PC-9 (cell line): ENCODE measurements at regions of chr3 and their contacts with region 1.

Region 1: DNA sequence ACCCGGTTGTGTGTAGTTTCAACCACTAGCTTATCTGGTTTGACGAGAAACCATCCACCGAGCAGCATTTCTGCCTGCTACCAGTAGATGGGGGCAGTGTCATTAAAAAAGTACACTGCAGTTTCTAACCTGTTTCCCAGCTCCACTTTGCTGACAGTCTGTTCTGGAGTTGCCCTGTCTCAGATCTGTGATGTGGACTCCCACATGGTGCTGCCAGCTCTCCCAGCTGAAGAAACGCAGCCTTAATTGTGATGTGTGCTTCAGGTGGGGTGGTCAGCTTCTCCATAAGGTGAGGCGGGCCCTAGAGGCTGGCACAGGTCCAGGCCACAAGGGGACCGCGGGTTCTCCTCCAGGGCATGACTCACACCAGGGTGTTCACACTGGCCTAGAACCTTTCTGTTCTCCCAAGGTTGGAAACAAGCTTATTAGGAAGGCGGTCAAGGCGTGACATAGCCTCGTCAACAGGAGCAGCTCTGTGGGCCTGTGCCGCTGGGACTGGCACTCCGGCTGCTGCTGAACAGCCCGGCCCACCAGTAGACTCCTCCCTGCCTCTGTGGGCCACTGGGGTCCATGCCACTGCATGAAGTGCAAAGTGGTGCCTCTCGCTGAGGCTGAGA is 2.9 kb upstream of the FAM43A start:
- DNase-seq: peak; percentile 82 to 94
- H3K4me3 ChIP-seq: no peak overlapping the region
- H3K27ac ChIP-seq: 0 out of 2 replicates have a peak overlapping the region, but pooled peaks have one; percentile 13
- H3K4me1 ChIP-seq: peaks cover 19% of the 10 kb centered on the region
- H3K27me3 ChIP-seq: no peaks in the 10 kb centered on the region
- CTCF ChIP-seq: peak; percentile 81

Region 2: DNA sequence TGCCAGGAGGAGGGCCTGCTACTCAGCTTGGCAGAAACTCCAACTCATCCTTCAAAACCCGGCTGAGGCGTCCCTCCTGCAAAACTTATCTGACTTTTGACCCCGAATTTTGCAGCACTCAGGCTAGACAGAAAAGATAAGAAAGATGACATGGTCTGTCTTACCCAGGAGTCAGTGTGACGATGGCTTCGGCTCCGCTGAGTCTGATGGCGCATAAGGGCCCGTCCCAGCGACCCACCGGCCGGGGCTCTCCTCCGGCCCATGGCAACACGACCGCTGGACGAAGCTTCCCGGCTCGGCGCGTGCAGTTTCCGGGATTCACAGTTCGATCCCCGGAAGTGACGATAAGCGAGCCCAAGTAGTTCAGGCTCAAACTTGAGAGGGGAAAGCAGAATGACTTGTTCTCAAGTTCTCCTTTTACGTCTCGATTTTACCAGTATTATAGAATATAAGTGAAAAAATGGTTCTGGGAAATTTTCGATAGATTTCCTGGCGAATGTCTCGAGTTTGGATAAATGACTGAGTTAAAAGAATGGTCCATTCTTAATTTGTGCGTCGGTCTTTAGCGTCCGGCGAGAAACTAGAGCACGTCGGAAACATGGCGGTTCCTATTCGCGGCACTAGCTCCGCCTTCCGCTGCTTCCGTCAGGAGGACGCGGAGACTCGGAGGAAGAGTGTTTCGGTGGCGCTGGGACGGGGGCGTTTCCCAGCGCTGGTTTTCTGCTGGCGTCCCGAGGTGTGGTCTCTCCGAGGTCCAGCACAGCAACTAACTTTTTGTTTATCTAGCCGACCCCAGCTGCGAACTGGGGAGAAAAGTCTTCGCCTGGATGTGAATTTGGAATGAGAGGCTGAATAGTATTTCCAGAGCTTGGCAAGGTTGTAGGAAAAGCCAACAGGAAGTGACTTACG is 10.6 kb before region 1 on chr3 and contains the start of gene LSG1:
- CTCF ChIA-PET with region 1: interaction called, 14 read pairs
- POLR2A ChIA-PET with region 1: no interaction called
- intact Hi-C with region 1: no loop called
- DNase-seq: peak; percentile 71 to 93
- H3K4me3 ChIP-seq: peak within 1 kb of the TSS; percentile 99
- H3K27ac ChIP-seq: peak within 1 kb of the TSS; percentile 88
- H3K4me1 ChIP-seq: peaks cover 13% of the 10 kb centered on the region; the same call in 1 of the 2 replicates
- H3K27me3 ChIP-seq: no peaks in the 10 kb centered on the region
- CTCF ChIP-seq: no peak
- total RNA-seq, gene LSG1: 59.2 and 71.8 TPM in 2 replicates

Region 3: DNA sequence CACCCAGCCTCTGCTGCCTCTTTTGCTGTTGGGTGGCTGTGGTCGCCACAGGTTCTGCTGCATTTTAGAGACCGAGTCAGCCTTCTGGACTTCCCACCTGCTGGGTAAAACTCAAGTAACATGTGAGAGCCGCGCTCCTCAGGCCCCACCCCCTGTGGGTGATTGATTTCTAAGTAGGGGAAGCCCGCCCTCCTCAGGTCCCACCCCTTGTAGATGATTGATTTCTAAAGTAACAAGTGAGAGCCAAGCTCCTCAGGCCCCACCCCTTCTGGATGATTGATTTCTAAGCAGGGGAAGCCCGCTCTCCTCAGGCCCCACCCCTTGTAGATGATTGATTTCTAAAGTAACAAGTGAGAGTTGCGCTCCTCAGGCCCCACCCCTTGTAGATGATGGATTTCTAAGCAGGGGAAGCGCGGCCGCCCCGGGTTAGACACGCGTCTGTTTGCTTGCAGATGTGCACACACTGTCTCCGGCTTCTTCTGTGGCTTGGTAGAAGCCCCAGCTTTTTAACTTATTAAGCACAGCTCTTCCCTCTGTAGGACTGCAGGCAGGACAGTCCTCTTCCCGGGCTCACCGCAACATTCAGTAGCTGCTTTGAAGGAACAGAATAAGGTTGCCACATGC is 86.3 kb after region 1 on chr3:
- CTCF ChIA-PET with region 1: interaction called, 6 read pairs
- POLR2A ChIA-PET with region 1: interaction called, 10 read pairs
- intact Hi-C with region 1: loop called (anchors 1 kb)
- DNase-seq: peak; percentile 96 to 97
- H3K4me3 ChIP-seq: peak overlapping the region; percentile 50; the same call in 1 of the 2 replicates
- H3K27ac ChIP-seq: no peak overlapping the region
- H3K4me1 ChIP-seq: peaks cover 26% of the 10 kb centered on the region
- H3K27me3 ChIP-seq: no peaks in the 10 kb centered on the region
- CTCF ChIP-seq: 0 out of 2 replicates have a peak, but pooled peaks have one; percentile 28

Region 4: DNA sequence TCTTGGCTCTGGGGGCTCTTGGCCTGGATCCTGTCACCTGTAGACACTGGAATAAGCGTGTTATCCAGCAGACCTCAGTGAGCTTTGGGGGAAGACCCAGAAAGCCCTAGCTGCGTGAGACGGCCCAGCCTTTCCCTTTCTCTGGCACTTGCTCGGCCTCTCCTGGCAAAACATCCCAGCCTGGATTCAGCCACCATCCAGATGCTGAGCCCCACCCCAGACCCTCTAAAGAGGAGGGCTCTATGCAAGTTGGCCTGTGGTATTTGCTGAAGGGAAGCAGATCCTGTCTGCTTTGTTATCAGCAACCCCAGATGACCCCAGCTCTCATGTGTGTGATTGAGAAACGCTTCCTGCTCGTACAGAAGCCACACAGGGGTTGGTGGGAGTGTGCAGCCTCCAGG is 270.0 kb after region 1 on chr3:
- CTCF ChIA-PET with region 1: interaction called, 10 read pairs
- POLR2A ChIA-PET with region 1: no interaction called
- intact Hi-C with region 1: loop called (anchors 1 kb)
- DNase-seq: no peak
- H3K4me3 ChIP-seq: no peak overlapping the region
- H3K27ac ChIP-seq: no peak overlapping the region
- H3K4me1 ChIP-seq: no peaks in the 10 kb centered on the region
- H3K27me3 ChIP-seq: no peaks in the 10 kb centered on the region
- CTCF ChIP-seq: no peak

Region 5: DNA sequence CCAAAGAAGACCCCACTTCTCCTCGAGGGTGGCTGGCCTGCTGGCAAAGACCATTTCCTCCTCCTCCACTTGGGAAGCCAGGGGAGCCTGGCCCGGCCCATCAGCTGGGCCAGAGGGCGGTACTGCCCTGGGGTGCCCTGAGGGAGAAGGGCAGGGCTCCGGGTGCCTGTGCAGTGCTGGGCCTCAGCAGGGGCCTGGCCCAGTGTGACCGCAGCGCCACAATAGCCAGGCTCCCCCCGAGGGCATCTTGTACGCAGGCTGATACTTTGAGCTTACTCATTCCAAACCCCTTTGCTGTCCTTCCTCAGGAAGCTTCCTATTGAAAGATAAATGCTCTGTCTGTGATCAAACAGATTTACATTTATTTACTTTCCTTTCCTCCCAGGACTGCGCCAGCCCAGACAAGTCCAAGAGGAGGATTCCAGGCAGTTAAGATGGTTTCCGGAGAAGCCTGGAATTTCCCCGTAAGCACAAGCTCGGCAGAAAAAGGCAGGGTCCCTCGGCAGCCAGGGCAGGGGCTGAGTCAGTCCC is 348.1 kb after region 1 on chr3:
- CTCF ChIA-PET with region 1: interaction called, 5 read pairs
- POLR2A ChIA-PET with region 1: no interaction called
- intact Hi-C with region 1: loop called (anchors 2 kb)
- DNase-seq: peak; percentile 98
- H3K4me3 ChIP-seq: peak overlapping the region; percentile 28; the same call in 1 of the 2 replicates
- H3K27ac ChIP-seq: peak overlapping the region; percentile 83
- H3K4me1 ChIP-seq: peaks cover 53% of the 10 kb centered on the region
- H3K27me3 ChIP-seq: no peaks in the 10 kb centered on the region
- CTCF ChIP-seq: no peak

Region 6: GRCh38 chr3:195133462-195133861 is 450.7 kb after region 1 on chr3:
- CTCF ChIA-PET with region 1: interaction called, 10 read pairs
- POLR2A ChIA-PET with region 1: no interaction called
- intact Hi-C with region 1: no loop called
- DNase-seq: no peak
- H3K4me3 ChIP-seq: no peak overlapping the region
- H3K27ac ChIP-seq: no peak overlapping the region
- H3K4me1 ChIP-seq: no peaks in the 10 kb centered on the region
- H3K27me3 ChIP-seq: no peaks in the 10 kb centered on the region
- CTCF ChIP-seq: no peak

Region 7: DNA sequence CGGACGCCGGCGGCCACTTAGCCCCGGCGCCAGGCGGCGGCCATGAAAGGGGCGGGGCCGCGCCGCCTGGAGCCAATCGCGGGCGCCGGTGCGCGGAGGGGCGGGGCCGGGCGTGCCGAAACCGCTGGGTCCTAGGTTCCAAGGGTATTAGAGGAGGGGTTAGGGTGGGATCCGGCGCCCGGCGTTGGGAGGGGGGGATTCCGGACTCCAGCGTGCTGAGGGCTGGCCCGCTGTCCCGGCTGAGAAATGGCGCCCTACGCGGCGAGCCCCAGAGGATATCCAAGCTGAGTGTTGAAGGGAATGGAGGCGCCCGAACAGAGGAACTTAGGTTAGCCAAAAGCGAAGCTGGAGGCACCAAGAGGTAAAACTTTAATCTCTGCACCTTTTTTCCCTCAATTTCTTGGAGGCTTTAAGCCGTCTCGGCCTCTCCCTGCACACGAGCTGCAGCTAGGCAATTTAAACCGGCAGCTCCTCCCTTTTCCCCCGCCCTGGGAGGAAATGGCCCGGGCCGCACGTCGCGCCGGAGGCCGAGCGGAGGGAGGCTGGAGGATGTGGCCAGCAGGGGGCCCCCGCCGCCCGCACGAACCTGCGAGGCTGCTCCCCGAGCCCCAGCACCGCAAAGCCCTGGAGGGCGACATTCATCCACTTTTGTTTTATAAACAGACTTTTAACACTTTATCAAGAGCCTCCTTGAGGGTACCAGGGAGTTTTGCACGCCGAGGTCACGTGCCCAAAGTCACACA is 588.5 kb after region 1 on chr3 and contains the start of gene XXYLT1:
- CTCF ChIA-PET with region 1: interaction called, 8 read pairs
- POLR2A ChIA-PET with region 1: no interaction called
- intact Hi-C with region 1: loop called (anchors 1 kb)
- DNase-seq: peak; percentile 70 to 95
- H3K4me3 ChIP-seq: peak within 1 kb of the TSS; percentile 89
- H3K27ac ChIP-seq: no peak within 1 kb of the TSS
- H3K4me1 ChIP-seq: peaks cover 18% of the 10 kb centered on the region
- H3K27me3 ChIP-seq: no peaks in the 10 kb centered on the region
- CTCF ChIP-seq: peak; percentile 99
- total RNA-seq, gene XXYLT1: 13.3 and 14.6 TPM in 2 replicates